Motor neuron (in vitro differentiated cells): ENCODE measurements at regions of chr16 and their contacts with region 1.

Region 1: DNA sequence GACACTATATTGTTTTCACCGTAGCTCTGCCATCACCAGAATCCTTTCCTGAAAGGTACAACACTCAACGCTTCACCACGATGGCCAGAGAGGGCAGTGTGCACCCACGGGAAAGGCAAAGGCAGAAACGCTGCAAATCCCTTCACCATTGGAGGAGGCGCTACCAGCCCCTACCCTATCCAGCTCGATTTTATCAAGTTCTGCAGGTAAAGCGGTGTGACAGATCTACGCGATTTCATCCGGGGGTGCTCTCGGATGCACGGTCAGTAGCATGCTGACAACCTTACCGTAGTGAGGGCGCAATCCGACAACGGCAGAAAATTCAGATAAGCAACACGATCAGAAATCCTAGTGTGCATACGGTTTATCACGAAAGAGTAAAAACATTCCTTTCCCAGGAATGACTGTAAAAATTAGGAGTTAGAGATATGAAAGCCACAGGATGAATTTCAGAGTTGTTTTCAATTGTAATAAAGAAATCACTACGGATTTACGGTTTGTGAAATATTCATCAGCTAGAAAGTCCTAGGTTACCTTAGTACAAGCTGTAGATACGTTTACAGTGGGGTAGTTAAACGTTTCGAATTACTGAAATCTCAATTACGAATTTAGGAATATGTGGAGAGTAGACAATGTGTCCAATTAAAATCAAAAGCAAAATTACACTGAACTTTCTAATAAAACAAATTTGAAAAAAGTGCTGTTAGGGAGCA is 1.8 kb downstream of the NETO2 start:
- ATAC-seq: peak; percentile 27 to 63 (median 56)
- H3K4me3 ChIP-seq: peak overlapping the region; percentile 65 to 93 (median 86)
- H3K27ac ChIP-seq: no peak overlapping the region
- H3K4me1 ChIP-seq: peaks cover 14 to 27% of the 10 kb centered on the region in 2 donors

Region 2: GRCh38 chr16:48156790-48157209 is 1014.9 kb after region 1 on chr16:
- in situ Hi-C with region 1: loop called (anchors 10 to 25 kb)
- ATAC-seq: peak; percentile 67 to 98 (median 84)
- H3K4me3 ChIP-seq: peak overlapping the region in 1 of 5 donors; percentile 1
- H3K27ac ChIP-seq: no peak overlapping the region
- H3K4me1 ChIP-seq: no peaks in the 10 kb centered on the region

Region 3: GRCh38 chr16:48164907-48165726 is 1023.2 kb after region 1 on chr16:
- in situ Hi-C with region 1: loop called in 8 of 9 experiments (anchors 25 kb)
- ATAC-seq: peak; percentile 88 to 100 (median 99)
- H3K4me3 ChIP-seq: no peak overlapping the region
- H3K27ac ChIP-seq: no peak overlapping the region
- H3K4me1 ChIP-seq: peaks cover 0 to 2% of the 10 kb centered on the region in 2 donors